ENCODE measurements at regions of chr11 and their contacts with region 1.

Region 1: GRCh38 chr11:65888163-65888814 is at the start of gene FIBP:
- DNase-seq: peak; percentile 97
- H3K4me3 ChIP-seq: peak within 1 kb of the TSS; percentile 34 to 66 (median 64)
- H3K27ac ChIP-seq: peak within 1 kb of the TSS; percentile 99
- H3K4me1 ChIP-seq: peaks cover 43% of the 10 kb centered on the region
- H3K27me3 ChIP-seq: no peaks in the 10 kb centered on the region
- CTCF ChIP-seq: peak; percentile 80 to 91
- POLR2A ChIP-seq: peak; percentile 99
- total RNA-seq, gene FIBP: 88.5 and 105 TPM in 2 replicates

Region 2: DNA sequence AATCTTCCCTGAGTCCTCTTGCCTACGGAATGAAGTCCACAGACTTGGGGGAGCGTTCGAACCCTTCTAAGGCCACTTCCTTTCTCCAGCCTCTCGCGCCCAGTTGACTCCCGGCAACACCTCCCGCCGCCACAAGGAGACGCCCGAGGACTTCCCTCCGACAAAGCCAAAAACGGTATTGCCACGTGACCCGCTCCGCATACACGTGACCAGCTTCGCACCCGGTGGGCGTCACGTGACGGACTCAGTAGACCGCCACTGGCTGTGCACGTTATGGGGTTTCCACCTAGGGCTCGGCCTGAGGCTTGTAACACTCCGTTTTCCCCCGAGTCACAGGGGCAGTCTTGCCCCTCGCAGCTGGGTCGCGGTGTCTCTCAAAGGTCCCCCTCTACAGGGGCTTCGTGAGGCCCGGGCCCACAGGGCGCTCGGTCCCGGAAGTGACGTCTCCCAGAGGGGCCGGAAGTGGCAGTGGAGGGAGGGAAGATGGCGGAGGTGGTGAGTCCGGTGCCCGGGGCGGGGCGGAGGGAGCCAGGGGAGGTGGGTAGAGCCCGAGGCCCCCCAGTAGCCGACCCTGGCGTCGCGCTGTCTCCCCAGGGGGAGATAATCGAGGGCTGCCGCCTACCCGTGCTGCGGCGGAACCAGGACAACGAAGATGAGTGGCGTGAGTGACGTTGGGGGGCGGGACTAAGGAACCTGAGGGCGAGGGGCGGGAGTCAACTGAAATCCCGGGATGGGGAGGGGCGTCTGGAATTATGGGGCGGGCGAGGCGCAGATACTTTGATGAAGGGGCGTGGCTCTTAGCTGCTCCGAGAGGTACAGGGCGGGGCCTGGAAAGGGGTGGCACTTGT is 176.3 kb before region 1 on chr11 and contains the start of gene KAT5:
- CTCF ChIA-PET with region 1: interaction called, 13 read pairs
- POLR2A ChIA-PET with region 1: interaction called, 8 read pairs
- dilution Hi-C with region 1: no loop called
- intact Hi-C with region 1: loop called (anchors 1 kb)
- DNase-seq: peak; percentile 98
- H3K4me3 ChIP-seq: peak within 1 kb of the TSS; percentile 19 to 66 (median 49)
- H3K27ac ChIP-seq: peak within 1 kb of the TSS; percentile 89
- H3K4me1 ChIP-seq: peaks cover 6% of the 10 kb centered on the region
- H3K27me3 ChIP-seq: no peaks in the 10 kb centered on the region
- CTCF ChIP-seq: peak; percentile 93 to 97
- POLR2A ChIP-seq: no peak
- total RNA-seq, gene KAT5: 48.8 and 50.2 TPM in 2 replicates

Region 3: DNA sequence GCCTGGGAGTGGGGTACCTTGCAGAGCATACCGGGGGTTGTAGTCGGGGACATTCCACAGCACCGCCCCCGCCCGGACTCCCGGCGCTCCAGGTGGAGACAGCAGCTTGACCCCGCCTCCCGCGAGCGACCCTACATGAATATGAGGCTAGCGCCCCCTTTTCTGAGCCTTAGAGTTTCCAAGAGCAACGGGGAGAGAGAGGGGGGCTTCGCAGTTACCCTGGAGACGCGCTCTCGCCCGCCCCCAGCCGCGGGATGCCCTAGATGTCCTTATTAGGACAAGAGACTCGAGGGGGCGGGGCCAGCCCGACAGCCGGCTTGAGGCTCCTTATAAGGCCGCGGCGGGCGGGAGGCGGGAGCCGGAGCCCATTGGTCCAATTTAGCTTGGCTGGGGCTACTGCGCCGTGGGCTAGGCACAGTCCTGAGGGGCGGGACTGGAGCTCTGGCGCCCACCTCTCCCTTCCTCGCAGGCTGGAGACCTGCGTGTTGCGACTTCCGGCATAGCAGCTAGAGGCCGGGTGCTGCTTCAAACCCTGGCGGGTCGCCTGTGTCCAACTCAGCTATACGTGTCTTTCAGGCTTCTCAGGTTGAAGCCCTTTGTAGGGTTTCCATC is 29.0 kb before region 1 on chr11:
- CTCF ChIA-PET with region 1: interaction called, 57 read pairs
- POLR2A ChIA-PET with region 1: interaction called, 67 read pairs
- dilution Hi-C with region 1: no loop called
- intact Hi-C with region 1: loop called (anchors 1 kb)
- DNase-seq: peak; percentile 98
- H3K4me3 ChIP-seq: peak overlapping the region; percentile 21 to 76 (median 71)
- H3K27ac ChIP-seq: peak overlapping the region; percentile 77
- H3K4me1 ChIP-seq: peaks cover 41% of the 10 kb centered on the region
- H3K27me3 ChIP-seq: no peaks in the 10 kb centered on the region
- CTCF ChIP-seq: peak in 1 of 2 donors; percentile 22
- POLR2A ChIP-seq: peak; percentile 94

Region 4: DNA sequence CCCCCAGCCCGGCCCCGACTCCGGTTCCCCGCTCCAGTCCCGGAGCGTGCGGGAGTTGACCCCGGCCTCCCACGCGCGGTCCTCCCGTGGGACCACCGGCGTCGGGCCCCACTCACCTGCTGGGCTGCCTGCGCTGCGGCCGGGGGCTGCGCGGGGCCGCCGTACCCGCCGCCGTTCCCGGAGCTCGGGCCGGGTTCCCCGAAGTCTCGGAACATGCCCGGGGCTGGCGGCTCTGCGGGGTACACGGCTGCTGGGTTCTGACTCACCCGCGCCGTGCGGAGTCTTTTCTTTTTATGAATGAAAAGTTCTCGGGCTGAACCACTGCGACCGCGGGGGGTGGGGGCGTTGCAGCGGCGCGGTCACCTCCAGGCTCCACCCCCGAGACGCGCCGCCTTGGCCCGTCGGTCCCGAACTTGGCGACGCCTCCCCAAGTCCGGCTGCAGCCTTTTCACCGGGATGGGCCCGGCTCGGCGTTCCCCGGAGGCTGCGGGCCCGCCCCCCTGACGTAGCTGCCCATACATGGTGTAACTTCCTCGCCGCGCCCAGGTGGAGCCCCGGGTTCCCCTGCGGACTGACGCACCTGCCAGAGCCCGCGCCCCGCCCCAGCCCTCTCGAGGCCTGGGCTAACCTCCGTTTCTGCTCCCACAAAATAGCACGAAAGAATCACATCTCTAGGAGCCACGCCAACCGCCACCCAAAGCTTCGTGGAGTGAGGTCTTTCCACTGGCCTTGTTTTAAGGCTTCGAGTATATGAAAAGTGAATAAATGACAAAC is 12.0 kb after region 1 on chr11 and contains the start of gene FOSL1:
- CTCF ChIA-PET with region 1: interaction called, 69 read pairs
- POLR2A ChIA-PET with region 1: interaction called, 29 read pairs
- dilution Hi-C with region 1: no loop called
- intact Hi-C with region 1: loop called (anchors 1 kb)
- DNase-seq: peak; percentile 94
- H3K4me3 ChIP-seq: peak within 1 kb of the TSS; percentile 58 to 79 (median 69)
- H3K27ac ChIP-seq: peak within 1 kb of the TSS; percentile 87
- H3K4me1 ChIP-seq: peaks cover 40% of the 10 kb centered on the region
- H3K27me3 ChIP-seq: no peaks in the 10 kb centered on the region
- CTCF ChIP-seq: no peak
- POLR2A ChIP-seq: peak; percentile 99
- total RNA-seq, gene FOSL1: 52.6 and 53.8 TPM in 2 replicates

Region 5: GRCh38 chr11:65932558-65932919 is 44.2 kb after region 1 on chr11:
- CTCF ChIA-PET with region 1: interaction called, 13 read pairs
- POLR2A ChIA-PET with region 1: no interaction called
- dilution Hi-C with region 1: no loop called
- intact Hi-C with region 1: loop called (anchors 5 kb)
- DNase-seq: no peak
- H3K4me3 ChIP-seq: no peak overlapping the region
- H3K27ac ChIP-seq: no peak overlapping the region
- H3K4me1 ChIP-seq: no peaks in the 10 kb centered on the region
- H3K27me3 ChIP-seq: peaks cover 0 to 2% of the 10 kb centered on the region in 2 experiments
- CTCF ChIP-seq: no peak
- POLR2A ChIP-seq: no peak

Region 6: GRCh38 chr11:65988791-65989592 is 100.7 kb after region 1 on chr11:
- CTCF ChIA-PET with region 1: interaction called, 115 read pairs
- POLR2A ChIA-PET with region 1: no interaction called
- dilution Hi-C with region 1: no loop called
- intact Hi-C with region 1: loop called (anchors 1 kb)
- DNase-seq: peak; percentile 97
- H3K4me3 ChIP-seq: no peak overlapping the region
- H3K27ac ChIP-seq: no peak overlapping the region
- H3K4me1 ChIP-seq: no peaks in the 10 kb centered on the region
- H3K27me3 ChIP-seq: no peaks in the 10 kb centered on the region
- CTCF ChIP-seq: peak; percentile 86 to 99
- POLR2A ChIP-seq: no peak